Activated CD4-positive, alpha-beta T cell treated with anti-CD3 and anti-CD28 coated beads for 36 hours (primary cell): ENCODE measurements at regions of chr3 and their contacts with region 1.

Region 1: DNA sequence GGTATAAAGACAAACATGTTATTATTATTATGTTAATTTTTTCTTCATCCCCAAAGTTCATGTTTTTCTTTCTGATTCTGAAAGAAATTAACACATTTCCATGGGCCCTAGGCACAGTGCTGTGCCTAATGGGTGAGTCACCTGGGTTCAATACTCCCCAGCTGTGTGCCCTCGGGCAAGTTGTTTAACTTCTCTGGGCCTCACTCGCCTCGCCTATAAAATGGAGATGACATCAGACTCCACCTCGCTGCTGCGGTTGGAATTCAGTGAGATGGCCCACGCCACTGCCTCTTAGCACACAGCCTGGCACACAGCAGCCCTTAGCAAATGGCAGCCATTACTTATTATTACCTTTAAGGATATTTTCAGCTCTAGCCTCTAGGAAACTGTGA is 22.6 kb downstream of the DNASE1L3 start:
- DNase-seq: no peak
- ATAC-seq: peak; percentile 63
- H3K4me3 Mint-ChIP-seq: no peak overlapping the region
- H3K27ac Mint-ChIP-seq: no peak overlapping the region
- H3K4me1 Mint-ChIP-seq: no peaks in the 10 kb centered on the region
- H3K27me3 Mint-ChIP-seq: no peaks in the 10 kb centered on the region

Region 2: GRCh38 chr3:58034738-58035523 is 153.2 kb before region 1 on chr3:
- CTCF ChIA-PET with region 1: no interaction called
- POLR2A ChIA-PET with region 1: no interaction called
- intact Hi-C with region 1: no loop called
- DNase-seq: peak; percentile 66
- ATAC-seq: peak; percentile 98
- H3K4me3 Mint-ChIP-seq: peak overlapping the region; percentile 19
- H3K27ac Mint-ChIP-seq: peak overlapping the region; percentile 86
- H3K4me1 Mint-ChIP-seq: peaks cover 53% of the 10 kb centered on the region
- H3K27me3 Mint-ChIP-seq: no peaks in the 10 kb centered on the region

Region 3: DNA sequence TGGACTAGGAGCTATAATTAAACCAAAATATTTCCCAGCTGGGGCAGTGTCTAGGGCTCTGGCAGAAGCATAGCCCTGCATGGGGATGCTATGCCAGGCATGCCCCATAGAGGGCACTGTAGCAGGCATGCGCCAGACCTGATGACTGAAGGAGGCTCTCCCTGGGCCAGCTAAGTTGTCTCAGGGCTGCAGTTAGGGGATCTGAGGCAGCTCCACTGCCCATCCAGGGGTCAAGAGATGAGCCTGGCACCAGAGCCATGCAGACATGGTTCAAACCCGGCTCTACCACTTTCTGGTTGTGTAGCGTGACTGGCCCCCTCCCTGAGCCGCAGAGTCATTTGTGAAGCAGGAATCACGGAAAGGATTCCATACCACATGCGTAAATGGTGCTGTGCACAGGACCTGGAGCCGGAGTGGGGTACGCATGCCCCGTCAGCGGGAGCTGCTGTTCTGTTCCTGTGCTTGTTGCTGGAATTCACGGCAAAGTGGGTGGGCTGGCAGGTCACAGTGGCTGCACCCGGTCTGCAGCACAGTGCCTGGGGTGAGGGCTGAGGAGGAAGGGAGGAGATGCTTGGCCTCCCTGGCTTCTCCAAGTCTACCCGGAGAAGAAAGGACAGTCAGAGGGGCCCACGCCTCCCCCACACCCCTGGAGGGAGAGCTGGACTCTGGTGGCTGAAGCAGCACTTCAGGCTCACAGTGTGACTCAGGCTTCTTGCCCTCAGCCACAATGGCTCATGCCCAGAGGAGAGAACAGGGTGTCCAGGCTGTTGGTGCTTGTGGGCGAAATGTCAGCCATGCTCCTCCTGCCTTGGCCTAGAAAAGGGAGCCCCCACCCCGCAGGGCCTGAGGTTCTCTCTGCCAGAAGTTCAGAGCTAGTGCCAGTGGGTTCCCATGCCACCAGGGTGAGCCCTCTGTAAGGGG is 20.5 kb before region 1 on chr3:
- CTCF ChIA-PET with region 1: interaction called, 13 read pairs
- POLR2A ChIA-PET with region 1: no interaction called
- intact Hi-C with region 1: no loop called
- DNase-seq: peak; percentile 83
- ATAC-seq: peak; percentile 98
- H3K4me3 Mint-ChIP-seq: no peak overlapping the region
- H3K27ac Mint-ChIP-seq: no peak overlapping the region
- H3K4me1 Mint-ChIP-seq: no peaks in the 10 kb centered on the region
- H3K27me3 Mint-ChIP-seq: no peaks in the 10 kb centered on the region

Region 4: DNA sequence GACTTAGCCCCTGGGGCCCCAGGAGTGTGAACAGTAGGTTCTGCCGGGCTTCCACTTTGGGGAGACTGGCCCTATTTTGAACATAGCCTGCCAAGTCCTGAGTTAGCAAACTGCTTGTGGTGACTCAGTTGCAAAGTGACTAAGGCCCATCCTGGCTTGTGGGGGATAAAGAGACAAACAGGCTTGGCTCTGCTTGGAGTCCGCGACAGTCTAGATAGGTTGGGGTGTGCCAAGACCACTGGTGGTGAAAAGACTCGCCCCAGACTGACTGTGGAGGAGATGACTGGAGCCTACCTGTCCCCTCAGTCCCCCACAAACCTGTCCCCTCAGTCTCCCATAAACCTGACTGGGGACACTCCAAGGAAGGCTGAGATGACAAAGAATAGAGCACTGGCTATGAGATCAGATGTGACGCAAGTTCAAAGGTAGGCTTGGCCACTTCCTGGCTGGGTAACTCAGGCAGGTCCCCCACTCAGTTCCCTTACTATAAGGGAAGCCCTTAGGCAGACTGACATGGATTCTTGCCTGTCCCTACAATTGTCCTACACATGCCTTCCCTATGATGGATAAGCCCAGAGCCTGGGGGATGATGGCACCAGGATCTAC is 18.3 kb after region 1 on chr3:
- CTCF ChIA-PET with region 1: interaction called, 224 read pairs
- POLR2A ChIA-PET with region 1: interaction called, 4 read pairs
- intact Hi-C with region 1: no loop called
- DNase-seq: peak; percentile 73
- ATAC-seq: peak; percentile 98
- H3K4me3 Mint-ChIP-seq: no peak overlapping the region
- H3K27ac Mint-ChIP-seq: peak overlapping the region; percentile 47
- H3K4me1 Mint-ChIP-seq: peaks cover 12% of the 10 kb centered on the region
- H3K27me3 Mint-ChIP-seq: peaks cover 13% of the 10 kb centered on the region

Region 5: GRCh38 chr3:58299839-58300516 is 111.8 kb after region 1 on chr3:
- CTCF ChIA-PET with region 1: interaction called, 40 read pairs
- POLR2A ChIA-PET with region 1: no interaction called
- intact Hi-C with region 1: loop called (anchors 1 kb)
- DNase-seq: no peak
- ATAC-seq: no peak
- H3K4me3 Mint-ChIP-seq: no peak overlapping the region
- H3K27ac Mint-ChIP-seq: no peak overlapping the region
- H3K4me1 Mint-ChIP-seq: no peaks in the 10 kb centered on the region
- H3K27me3 Mint-ChIP-seq: peaks cover 14% of the 10 kb centered on the region

Region 6: DNA sequence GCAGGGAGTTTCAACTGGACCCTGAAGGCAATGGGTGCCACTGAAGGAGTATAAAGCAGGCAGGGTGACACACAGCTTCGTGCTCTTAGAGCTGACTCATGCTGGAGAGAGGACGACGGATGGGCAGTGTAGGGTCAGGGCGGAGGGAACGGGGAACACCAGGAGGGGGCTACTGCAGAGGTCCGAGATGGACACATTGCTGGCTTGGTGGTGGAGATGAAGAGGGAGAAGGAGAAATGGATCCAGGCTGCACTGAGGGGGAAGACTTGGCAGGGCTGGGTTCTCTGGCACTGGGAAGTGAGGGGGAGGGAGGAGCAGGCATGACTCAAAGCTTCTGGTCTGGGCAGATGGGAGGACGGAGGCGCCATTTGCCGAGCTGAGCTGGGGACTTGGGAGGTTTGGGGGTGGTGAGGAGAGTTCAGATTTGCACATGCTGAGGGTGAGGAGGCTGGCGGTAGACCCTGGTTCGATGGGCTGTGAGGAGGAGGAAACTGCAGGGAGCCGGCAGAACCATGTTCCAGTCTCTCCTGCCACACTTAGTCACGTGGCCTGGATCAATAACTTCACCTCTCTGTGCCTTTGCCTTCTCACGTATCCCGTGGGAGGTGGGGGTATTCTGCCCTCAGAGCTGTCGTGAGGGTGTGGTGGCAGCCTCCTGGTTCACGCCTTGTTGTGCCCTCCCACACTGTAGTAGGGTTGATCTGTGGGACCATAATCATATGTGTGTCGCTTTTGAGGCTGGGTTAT is 299.1 kb after region 1 on chr3:
- CTCF ChIA-PET with region 1: no interaction called
- POLR2A ChIA-PET with region 1: no interaction called
- intact Hi-C with region 1: no loop called
- DNase-seq: no peak
- ATAC-seq: no peak
- H3K4me3 Mint-ChIP-seq: no peak overlapping the region
- H3K27ac Mint-ChIP-seq: no peak overlapping the region
- H3K4me1 Mint-ChIP-seq: peaks cover 7% of the 10 kb centered on the region
- H3K27me3 Mint-ChIP-seq: peaks cover 6% of the 10 kb centered on the region